ENCODE measurements at regions of chr3 and their contacts with region 1.

Region 1: GRCh38 chr3:15629860-15630597 is 28.5 kb downstream of the BTD start:
- DNase-seq: peak in 1 of 2 donors; percentile 56
- ATAC-seq: peak; percentile 87
- H3K4me3 ChIP-seq: peak overlapping the region; percentile 30 to 46
- H3K27ac ChIP-seq: no peak overlapping the region
- H3K4me1 ChIP-seq: peaks cover 0 to 3% of the 10 kb centered on the region in 2 donors
- H3K27me3 ChIP-seq: no peaks in the 10 kb centered on the region

Region 2: DNA sequence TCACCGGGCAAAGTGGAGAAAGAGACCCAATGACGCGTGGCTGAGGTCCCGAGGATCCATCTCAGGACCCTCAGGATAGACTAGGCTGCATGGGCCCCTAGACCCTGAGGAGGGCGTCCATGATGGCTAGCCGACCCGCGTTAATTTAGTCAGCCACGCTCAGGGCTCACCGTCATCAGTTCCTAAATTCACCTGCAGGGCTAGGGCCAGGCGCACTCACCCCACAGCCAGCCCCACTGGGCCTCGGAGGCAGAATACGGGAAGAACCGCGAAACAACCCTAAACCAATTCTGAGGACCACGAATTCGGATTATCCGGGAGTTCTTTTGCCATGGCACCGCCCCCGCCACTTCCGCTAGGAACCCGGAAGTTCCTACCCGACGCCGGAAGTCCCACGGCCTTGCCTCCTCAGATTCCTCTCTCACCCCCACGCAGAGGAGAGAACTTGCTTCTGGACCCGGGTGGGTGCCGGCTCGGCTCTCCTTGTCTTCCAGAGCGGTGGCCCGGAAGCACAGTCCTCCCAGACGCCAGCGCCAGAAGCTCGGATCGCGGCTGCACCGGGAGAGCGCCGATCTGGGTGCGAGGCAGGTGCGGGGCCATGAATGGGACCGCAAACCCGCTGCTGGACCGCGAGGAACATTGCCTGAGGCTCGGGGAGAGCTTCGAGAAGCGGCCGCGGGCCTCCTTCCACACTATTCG is 202.7 kb before region 1 on chr3 and contains the starts of genes EAF1 and METTL6:
- intact Hi-C with region 1: no loop called
- DNase-seq: peak; percentile 91 to 95
- ATAC-seq: peak; percentile 93
- H3K4me3 ChIP-seq: peak within 1 kb of the TSS; percentile 74 to 89
- H3K27ac ChIP-seq: peak within 1 kb of the TSS; percentile 31 to 72
- H3K4me1 ChIP-seq: peaks cover 1 to 4% of the 10 kb centered on the region in 2 donors
- H3K27me3 ChIP-seq: no peaks in the 10 kb centered on the region
- total RNA-seq, gene EAF1: 18.2 to 19.4 TPM
- total RNA-seq, gene METTL6: 13.3 to 16.0 TPM

Region 3: GRCh38 chr3:15797642-15798303 is 167.7 kb after region 1 on chr3 and contains the start of gene ANKRD28:
- intact Hi-C with region 1: loop called in 1 of 2 experiments (anchors 5 kb)
- DNase-seq: no peak
- ATAC-seq: peak; percentile 86
- H3K4me3 ChIP-seq: peak within 1 kb of the TSS; percentile 51 to 84
- H3K27ac ChIP-seq: peak within 1 kb of the TSS; percentile 44 to 86
- H3K4me1 ChIP-seq: peaks cover 0 to 2% of the 10 kb centered on the region in 2 donors
- H3K27me3 ChIP-seq: no peaks in the 10 kb centered on the region
- total RNA-seq, gene ANKRD28: 52.7 to 61.3 TPM

Region 4: GRCh38 chr3:15805756-15806266 is 175.8 kb after region 1 on chr3:
- intact Hi-C with region 1: loop called (anchors 2 to 5 kb)
- DNase-seq: no peak
- ATAC-seq: no peak
- H3K4me3 ChIP-seq: no peak overlapping the region
- H3K27ac ChIP-seq: no peak overlapping the region
- H3K4me1 ChIP-seq: peaks cover 0 to 5% of the 10 kb centered on the region in 2 donors
- H3K27me3 ChIP-seq: no peaks in the 10 kb centered on the region

Measured in aorta (tissue), 5 donors.